H1 (cell line): ENCODE measurements at regions of chr2 and their contacts with region 1.

Region 1: DNA sequence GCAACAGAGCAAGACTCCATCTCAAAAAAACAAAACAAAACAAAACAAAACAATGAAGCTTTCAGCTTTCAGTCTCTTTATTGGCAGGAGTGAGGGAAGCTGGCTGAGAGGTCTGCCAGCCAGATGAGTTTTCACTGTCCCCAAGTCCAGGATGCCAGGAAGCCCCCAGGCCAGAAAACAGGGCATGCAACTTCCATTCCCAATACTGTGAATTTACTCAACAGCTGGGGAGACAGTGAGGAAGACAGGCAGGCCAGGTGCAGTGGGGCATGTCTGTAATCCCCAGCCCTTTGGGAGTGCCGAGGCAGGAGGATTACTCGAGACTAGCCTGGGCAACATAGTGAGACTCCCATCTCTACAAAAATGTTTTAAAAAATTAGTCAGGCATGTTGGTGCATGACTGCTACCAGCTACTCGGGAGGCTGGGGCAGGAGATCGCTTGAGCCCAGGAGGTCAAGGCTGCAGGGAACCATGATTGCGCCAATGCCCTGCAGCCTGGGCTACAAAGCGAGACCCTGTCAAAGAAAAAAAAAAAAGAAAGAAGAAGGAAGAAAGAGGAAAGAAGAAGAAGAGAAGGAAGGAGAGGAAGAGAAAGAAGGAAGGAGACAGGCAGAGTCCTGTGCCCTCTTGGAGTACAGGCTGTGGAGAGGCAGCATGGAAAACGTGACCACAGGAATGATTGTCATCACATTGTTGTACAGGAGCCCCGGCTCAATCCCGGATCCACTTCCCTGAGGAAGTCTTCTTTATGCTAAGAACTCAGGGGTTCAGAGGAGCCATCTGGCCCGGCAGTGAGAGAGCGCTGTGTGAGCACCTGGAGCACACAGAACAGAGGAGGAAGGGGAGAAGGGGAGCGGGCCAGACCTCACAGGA is 29.2 kb upstream of the POMC start:
- DNase-seq: no peak
- H3K4me3 ChIP-seq: no peak overlapping the region
- H3K27ac ChIP-seq: no peak overlapping the region
- H3K4me1 ChIP-seq: no peaks in the 10 kb centered on the region; a peak in 1 of 7 replicates
- H3K27me3 ChIP-seq: no peaks in the 10 kb centered on the region
- CTCF ChIP-seq: no peak
- EP300 ChIP-seq: no peak
- POLR2A ChIP-seq: no peak
- RAD21 ChIP-seq: no peak

Region 2: DNA sequence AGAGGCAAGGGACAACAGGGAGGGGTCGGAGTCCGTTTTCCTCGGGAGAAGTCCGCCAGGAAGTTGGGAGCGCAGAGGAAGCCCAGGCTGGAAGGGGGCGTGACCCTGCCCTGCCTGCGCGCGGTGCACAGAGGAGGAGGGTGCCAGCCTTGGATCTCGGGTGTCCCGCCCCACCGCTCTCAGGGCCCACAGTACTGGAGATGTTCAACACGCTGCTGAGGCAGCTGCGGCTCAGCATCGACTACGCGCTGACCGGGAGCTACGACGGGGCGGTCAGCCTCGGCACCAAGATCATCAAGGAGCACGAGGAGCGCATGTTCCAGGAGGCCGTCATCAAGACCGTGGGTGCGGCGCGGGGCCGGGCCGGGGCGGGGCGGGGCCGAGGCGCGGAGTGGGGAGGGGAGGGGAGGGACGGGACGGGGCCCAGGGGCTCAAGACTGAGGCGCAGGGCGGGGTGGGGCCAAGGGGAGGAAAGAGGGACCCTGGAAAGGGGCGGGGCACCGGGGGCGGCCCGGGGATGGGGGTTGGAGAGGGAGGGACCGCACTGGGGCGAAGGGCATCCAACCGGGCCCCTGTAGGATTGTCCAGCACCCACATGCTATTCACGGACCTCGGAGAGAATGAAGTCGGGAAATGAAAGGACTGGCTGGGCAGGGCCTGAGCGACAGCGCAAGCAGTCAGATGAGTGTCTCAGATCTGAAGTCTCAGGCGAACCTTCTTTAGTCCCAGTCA is 65.8 kb before region 1 on chr2:
- CTCF ChIA-PET with region 1: interaction called, 26 read pairs
- POLR2A ChIA-PET with region 1: no interaction called
- DNase-seq: peak in 1 of 2 experiments; percentile 67
- H3K4me3 ChIP-seq: peak overlapping the region; percentile 39 to 56 (median 49); a peak in 7 of 8 replicates
- H3K27ac ChIP-seq: no peak overlapping the region
- H3K4me1 ChIP-seq: peaks cover 0 to 12% (median 7%) of the 10 kb centered on the region in 4 experiments; a peak in 6 of 7 replicates
- H3K27me3 ChIP-seq: peaks cover 2 to 32% (median 21%) of the 10 kb centered on the region in 4 experiments
- CTCF ChIP-seq: no peak
- EP300 ChIP-seq: no peak
- POLR2A ChIP-seq: no peak
- RAD21 ChIP-seq: no peak

Region 3: DNA sequence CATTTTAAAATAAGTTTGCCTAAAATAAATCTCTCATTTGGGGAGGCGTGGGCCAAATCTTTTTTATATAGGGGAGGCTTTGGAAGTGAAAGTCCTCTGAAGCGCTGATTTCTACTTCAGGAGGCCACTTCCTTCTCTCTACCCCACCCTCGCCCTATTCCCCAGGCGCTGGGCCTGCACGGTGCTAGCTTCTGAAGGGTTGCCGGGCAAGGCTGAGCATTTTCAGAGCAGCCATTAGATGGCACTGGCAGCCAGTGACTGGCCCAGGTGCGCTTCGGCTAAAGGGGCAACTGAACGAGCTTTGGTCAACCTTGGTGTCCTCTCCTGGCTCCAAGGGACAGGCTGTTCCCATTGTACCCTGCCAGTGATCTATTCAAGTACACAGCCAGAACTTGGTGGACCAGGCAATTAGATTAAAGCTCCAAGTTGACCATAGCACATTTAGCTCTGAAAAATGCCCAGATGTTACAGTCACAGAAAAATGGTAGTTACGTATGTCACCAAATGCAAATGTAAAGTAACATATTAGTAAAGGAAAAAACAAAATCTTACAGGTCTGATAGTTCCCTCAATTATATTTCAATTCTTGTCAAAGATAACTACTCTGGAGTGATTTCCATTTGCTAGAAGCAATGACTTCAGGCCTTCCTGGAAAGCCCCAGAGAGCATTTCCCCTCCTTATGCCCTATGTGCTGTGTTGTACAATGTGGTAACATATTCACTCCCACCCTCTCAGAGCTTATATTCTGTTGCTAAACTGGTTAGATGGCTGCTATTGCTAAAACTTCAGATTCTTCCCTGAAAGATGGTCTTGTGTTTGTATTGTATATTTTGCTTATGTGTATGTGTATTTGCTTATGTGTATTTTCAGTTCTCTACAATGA is 31.3 kb before region 1 on chr2:
- CTCF ChIA-PET with region 1: interaction called, 106 read pairs
- POLR2A ChIA-PET with region 1: no interaction called
- DNase-seq: peak in 1 of 2 experiments; percentile 65
- H3K4me3 ChIP-seq: no peak overlapping the region
- H3K27ac ChIP-seq: no peak overlapping the region
- H3K4me1 ChIP-seq: peaks cover 0 to 5% (median 4%) of the 10 kb centered on the region in 4 experiments; a peak in 5 of 7 replicates
- H3K27me3 ChIP-seq: peaks cover 14 to 45% (median 41%) of the 10 kb centered on the region in 4 experiments
- CTCF ChIP-seq: peak; percentile 66 to 82 (median 79)
- EP300 ChIP-seq: no peak; a peak in 1 of 3 replicates
- POLR2A ChIP-seq: no peak
- RAD21 ChIP-seq: peak; percentile 82 to 87

Region 4: DNA sequence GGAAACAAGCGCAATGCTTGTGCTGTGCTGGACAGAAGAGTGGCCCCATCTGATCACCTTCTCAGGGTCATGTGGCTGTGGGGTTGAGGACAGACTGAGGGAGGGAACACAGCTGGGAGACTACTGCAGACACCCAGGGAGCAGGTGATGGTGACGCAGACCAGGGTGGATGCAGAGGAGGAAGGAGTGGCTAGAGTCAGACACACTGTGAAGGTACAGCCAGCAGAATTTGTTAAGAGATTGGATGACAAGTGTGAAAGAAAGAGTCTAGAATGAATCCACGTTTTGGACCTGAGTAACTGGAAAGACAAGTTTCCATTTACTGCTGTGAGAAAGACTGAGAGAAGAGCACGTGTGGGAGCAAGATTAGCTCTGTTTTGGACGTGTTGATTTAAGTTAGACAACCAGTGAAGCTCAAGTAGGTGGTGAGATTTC is 13.3 kb before region 1 on chr2:
- CTCF ChIA-PET with region 1: interaction called, 14 read pairs
- POLR2A ChIA-PET with region 1: no interaction called
- DNase-seq: no peak
- H3K4me3 ChIP-seq: no peak overlapping the region
- H3K27ac ChIP-seq: no peak overlapping the region
- H3K4me1 ChIP-seq: no peaks in the 10 kb centered on the region
- H3K27me3 ChIP-seq: no peaks in the 10 kb centered on the region
- CTCF ChIP-seq: no peak
- EP300 ChIP-seq: no peak
- POLR2A ChIP-seq: no peak
- RAD21 ChIP-seq: no peak

Region 5: DNA sequence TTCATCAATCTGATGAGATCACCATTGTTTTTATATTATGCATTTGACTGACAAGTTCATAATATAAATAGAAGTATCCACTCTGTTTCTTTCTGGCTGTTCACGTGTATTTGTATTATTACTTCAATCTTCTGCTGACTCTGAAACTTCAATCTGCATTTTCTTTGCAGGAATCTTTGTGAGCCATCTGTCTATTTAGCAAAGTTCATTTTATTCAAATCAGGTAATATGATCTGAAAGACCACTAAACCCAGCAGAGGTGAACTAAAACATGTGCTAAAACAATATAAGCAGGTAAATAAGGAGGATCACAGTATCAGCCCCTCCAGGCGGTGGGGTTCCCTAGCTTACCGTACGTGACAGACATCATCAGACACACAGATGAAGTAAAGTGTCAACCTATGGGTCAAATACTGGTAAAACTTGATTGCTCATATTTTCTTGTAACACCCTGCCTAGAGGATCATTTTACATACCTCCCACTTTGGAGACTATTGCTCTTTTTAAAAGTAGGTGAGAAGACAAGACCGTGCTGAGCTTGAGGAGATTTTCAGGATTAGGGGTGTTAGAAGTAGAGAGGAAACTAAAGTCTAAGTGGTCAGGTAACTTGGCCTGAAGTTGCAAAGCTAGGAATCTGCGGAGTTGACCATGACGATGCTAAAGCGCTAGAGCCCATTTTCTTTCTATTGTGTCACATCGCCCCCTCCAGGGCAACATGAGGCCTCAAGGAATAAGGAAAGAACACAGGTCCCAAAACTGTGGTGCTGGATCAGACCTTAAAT is 466.8 kb after region 1 on chr2:
- CTCF ChIA-PET with region 1: no interaction called
- POLR2A ChIA-PET with region 1: no interaction called
- DNase-seq: peak; percentile 43 to 62
- H3K4me3 ChIP-seq: no peak overlapping the region
- H3K27ac ChIP-seq: no peak overlapping the region
- H3K4me1 ChIP-seq: peaks cover 0 to 8% (median 2%) of the 10 kb centered on the region in 4 experiments; a peak in 3 of 7 replicates
- H3K27me3 ChIP-seq: no peaks in the 10 kb centered on the region
- CTCF ChIP-seq: peak; percentile 50 to 87 (median 79)
- EP300 ChIP-seq: no peak
- POLR2A ChIP-seq: no peak
- RAD21 ChIP-seq: peak; percentile 87 to 91